Panc1 (cell line): ENCODE measurements at regions of chr15 and their contacts with region 1.

Region 1: DNA sequence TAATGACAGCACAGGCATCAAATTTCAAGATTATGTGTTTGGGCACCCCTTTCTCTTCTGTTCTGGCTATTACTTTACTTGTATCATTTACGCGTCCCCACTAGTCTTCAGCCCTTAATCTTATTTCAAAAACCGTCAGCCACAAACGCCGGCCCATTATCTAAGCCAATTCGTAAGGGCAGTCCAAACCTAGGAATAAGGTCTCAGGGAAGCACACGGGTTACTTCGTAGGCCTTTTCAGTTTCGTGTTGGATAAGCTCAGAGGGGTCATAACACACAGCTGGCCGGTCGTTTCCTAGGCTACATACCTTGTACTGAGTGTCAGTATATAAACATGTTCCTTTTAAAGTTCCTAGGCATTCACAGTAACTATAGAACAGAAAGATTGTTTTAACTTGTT is 5.1 kb upstream of the DNAAF4 start:
- DNase-seq: no peak
- ATAC-seq: no peak
- H3K4me3 ChIP-seq: no peak overlapping the region
- H3K27ac ChIP-seq: no peak overlapping the region
- H3K4me1 ChIP-seq: no peaks in the 10 kb centered on the region
- H3K27me3 ChIP-seq: no peaks in the 10 kb centered on the region
- CTCF ChIP-seq: no peak

Region 2: DNA sequence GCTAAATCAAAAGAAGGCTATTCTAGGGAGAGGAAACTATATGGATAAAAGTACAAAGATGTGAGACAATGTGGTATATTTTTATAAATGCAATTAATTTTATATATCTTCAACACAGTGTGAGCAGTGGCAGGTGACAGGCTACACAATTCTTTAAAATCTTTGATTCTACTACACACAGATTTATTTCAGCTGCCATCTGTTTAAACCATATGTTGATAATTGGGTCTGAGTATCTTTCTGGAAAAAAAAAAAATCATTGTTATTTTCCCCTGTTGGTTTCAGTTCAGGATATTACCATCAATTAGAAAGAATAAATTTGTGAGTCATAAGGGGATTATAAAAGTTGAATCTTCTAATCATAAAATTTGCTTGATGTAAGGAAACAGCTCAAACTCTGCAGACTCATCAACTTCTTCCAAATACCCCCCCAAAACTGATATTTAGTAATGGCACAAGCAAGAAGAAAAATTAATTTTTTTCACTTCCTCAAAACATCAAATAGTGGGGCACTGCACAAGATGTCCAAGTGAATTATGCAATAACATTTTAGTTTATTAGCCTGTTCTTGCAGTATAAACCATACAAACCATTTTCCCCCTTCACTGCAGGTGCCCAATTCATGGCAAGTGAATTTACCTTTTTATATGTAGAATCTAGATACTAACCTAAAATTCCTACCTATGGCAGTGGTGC is 92.8 kb before region 1 on chr15:
- CTCF ChIA-PET with region 1: interaction called, 12 read pairs
- POLR2A ChIA-PET with region 1: no interaction called
- in situ Hi-C with region 1: no loop called
- intact Hi-C with region 1: no loop called
- DNase-seq: no peak
- ATAC-seq: no peak
- H3K4me3 ChIP-seq: no peak overlapping the region
- H3K27ac ChIP-seq: no peak overlapping the region
- H3K4me1 ChIP-seq: no peaks in the 10 kb centered on the region
- H3K27me3 ChIP-seq: no peaks in the 10 kb centered on the region
- CTCF ChIP-seq: no peak

Region 3: DNA sequence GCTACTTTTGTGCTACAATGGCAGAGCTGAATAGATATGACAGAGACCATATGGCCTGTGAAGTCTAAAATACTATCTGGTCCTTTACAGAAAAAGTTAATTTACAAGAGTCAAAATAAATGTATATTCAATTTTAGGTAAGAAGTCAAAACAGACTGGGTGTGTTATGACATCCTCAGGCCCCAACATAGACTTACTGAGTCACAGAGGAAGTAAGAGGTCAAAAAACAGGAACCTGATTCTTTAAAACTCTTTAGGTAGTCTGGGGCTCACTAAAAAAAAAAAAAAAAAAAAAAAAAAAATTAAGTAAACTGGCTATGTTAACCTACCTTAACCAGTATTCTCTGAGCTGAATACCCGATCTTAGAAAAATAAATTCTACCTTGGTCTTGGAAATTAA is 18.2 kb before region 1 on chr15:
- CTCF ChIA-PET with region 1: no interaction called
- POLR2A ChIA-PET with region 1: no interaction called
- in situ Hi-C with region 1: no loop called
- intact Hi-C with region 1: no loop called
- DNase-seq: no peak
- ATAC-seq: no peak
- H3K4me3 ChIP-seq: no peak overlapping the region
- H3K27ac ChIP-seq: no peak overlapping the region
- H3K4me1 ChIP-seq: peaks cover 3% of the 10 kb centered on the region; the same call in 1 of the 2 replicates
- H3K27me3 ChIP-seq: no peaks in the 10 kb centered on the region
- CTCF ChIP-seq: no peak

Region 4: GRCh38 chr15:55588070-55588814 is 75.1 kb after region 1 on chr15 and contains the start of gene PYGO1:
- CTCF ChIA-PET with region 1: interaction called, 11 read pairs
- POLR2A ChIA-PET with region 1: no interaction called
- in situ Hi-C with region 1: no loop called
- intact Hi-C with region 1: no loop called
- DNase-seq: no peak
- ATAC-seq: peak; percentile 93
- H3K4me3 ChIP-seq: peak within 1 kb of the TSS; percentile 54 to 60
- H3K27ac ChIP-seq: no peak within 1 kb of the TSS
- H3K4me1 ChIP-seq: no peaks in the 10 kb centered on the region; the same call in 1 of the 2 replicates
- H3K27me3 ChIP-seq: peaks cover 22% of the 10 kb centered on the region
- CTCF ChIP-seq: no peak; the same call in 1 of the 2 replicates
- total RNA-seq, gene PYGO1: 2.4 TPM